ENCODE measurements at regions of chr11 and their contacts with region 1.

Region 1: DNA sequence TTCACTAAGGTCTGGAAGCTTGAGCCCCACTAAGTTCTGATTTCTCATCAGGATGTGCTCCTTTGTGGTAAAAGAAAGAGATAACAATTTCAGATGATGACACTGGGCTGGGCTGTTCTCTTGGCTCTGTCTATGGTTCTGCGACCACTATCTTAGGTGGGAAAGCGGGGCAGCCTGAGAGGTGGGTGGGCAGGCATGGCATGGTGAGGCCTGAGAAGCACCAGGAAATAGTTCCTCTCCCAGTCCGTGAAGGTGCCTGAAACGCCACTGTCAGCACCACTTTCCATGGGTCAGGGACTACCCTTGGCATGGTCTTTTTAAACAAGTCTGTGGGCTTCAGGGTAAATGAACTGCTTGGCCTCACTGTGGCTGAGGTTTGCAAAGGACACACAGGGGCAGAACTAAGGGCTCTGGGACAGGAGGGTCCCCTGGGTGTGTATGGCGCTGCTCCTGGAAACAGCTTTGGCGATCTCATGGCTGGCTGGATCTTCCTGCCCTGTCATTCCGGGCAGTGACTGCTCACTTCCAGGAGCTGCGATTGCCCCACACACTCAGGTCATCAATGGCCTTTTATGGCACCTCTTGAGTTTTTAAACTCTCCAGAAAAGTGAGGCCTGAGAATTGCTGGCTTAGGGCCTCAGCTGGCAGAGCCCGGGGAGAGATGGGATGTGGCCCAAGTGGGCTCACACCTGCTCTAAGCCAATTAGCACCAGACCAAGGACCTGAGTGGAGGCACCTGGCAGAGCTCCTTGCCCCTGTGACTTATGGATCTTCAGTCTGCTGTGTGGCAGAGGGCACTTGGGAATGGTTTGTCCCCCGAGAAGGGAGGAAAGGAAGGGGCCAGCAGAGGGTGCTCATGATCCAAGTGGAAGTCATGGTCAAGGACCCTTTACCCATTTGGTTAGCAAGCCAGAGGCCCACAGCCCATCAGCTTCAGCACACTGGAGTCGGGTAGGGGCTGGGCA is 55.6 kb upstream of the LYVE1 start:
- DNase-seq: peak; percentile 81 to 82
- H3K4me3 ChIP-seq: no peak overlapping the region
- H3K4me3 Mint-ChIP-seq: no peak overlapping the region
- H3K27ac Mint-ChIP-seq: no peak overlapping the region
- H3K4me1 ChIP-seq: peaks cover 14% of the 10 kb centered on the region
- H3K4me1 Mint-ChIP-seq: no peaks in the 10 kb centered on the region
- H3K27me3 ChIP-seq: no peaks in the 10 kb centered on the region
- H3K27me3 Mint-ChIP-seq: no peaks in the 10 kb centered on the region
- CTCF ChIP-seq: peak; percentile 79 to 83

Region 2: DNA sequence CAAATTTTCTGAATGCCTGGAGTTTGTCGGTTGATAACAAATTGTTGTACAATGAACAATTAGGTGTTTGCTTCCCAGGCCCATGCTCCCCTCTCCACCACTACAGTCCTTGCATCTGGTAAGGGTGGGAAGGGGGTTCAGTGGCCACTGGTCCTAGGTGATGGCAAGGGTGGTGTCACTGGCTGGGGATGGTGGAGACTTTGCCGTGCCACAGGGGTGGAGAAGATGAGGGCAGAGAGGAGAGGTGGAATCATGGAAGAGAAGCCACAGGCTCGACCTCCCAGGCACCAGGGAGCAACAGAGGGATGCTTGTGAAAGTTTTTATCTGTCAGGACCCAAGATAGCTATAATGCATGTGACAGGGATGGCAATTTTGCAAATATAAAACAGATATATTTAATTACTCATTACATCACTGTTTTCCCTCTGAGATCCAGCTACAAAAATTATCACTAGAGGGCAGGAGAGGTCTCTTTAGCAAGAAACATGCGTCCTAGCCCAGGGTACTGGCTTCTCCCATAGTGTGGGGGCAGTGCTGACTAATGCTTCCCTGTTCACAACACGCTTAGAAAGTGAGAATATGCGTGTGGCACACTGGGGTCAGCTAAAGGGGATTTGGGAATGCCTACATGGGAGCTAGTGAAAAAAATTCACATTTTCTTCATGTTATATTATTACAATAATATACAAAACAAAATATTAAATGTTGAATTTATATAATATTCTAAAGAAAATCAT is 218.1 kb before region 1 on chr11:
- CTCF ChIA-PET with region 1: interaction called, 3 read pairs
- POLR2A ChIA-PET with region 1: no interaction called
- intact Hi-C with region 1: loop called (anchors 2 kb)
- DNase-seq: peak; percentile 80 to 84
- H3K4me3 ChIP-seq: no peak overlapping the region
- H3K4me3 Mint-ChIP-seq: no peak overlapping the region
- H3K27ac Mint-ChIP-seq: peak overlapping the region; percentile 74
- H3K4me1 ChIP-seq: peaks cover 14% of the 10 kb centered on the region
- H3K4me1 Mint-ChIP-seq: peaks cover 16% of the 10 kb centered on the region
- H3K27me3 ChIP-seq: no peaks in the 10 kb centered on the region
- H3K27me3 Mint-ChIP-seq: no peaks in the 10 kb centered on the region
- CTCF ChIP-seq: peak; percentile 74 to 81

Region 3: GRCh38 chr11:10592331-10592730 is 31.7 kb before region 1 on chr11:
- CTCF ChIA-PET with region 1: no interaction called
- POLR2A ChIA-PET with region 1: no interaction called
- intact Hi-C with region 1: loop called (anchors 2 kb)
- DNase-seq: peak in 1 of 2 experiments; percentile 15
- H3K4me3 ChIP-seq: no peak overlapping the region
- H3K4me3 Mint-ChIP-seq: no peak overlapping the region
- H3K27ac Mint-ChIP-seq: no peak overlapping the region
- H3K4me1 ChIP-seq: peaks cover 6% of the 10 kb centered on the region; the same call in 1 of the 2 replicates
- H3K4me1 Mint-ChIP-seq: peaks cover 10% of the 10 kb centered on the region
- H3K27me3 ChIP-seq: no peaks in the 10 kb centered on the region
- H3K27me3 Mint-ChIP-seq: no peaks in the 10 kb centered on the region
- CTCF ChIP-seq: no peak

Region 4: GRCh38 chr11:10653926-10654810 is 30.1 kb after region 1 on chr11:
- CTCF ChIA-PET with region 1: no interaction called
- POLR2A ChIA-PET with region 1: no interaction called
- intact Hi-C with region 1: loop called (anchors 1 kb)
- DNase-seq: no peak
- H3K4me3 ChIP-seq: no peak overlapping the region
- H3K4me3 Mint-ChIP-seq: no peak overlapping the region
- H3K27ac Mint-ChIP-seq: peak overlapping the region; percentile 97
- H3K4me1 ChIP-seq: peaks cover 64% of the 10 kb centered on the region
- H3K4me1 Mint-ChIP-seq: peaks cover 16% of the 10 kb centered on the region
- H3K27me3 ChIP-seq: no peaks in the 10 kb centered on the region
- H3K27me3 Mint-ChIP-seq: no peaks in the 10 kb centered on the region
- CTCF ChIP-seq: peak; percentile 34 to 60

Region 5: GRCh38 chr11:10659339-10660216 is 35.5 kb after region 1 on chr11:
- CTCF ChIA-PET with region 1: no interaction called
- POLR2A ChIA-PET with region 1: no interaction called
- intact Hi-C with region 1: loop called (anchors 1 kb)
- DNase-seq: peak; percentile 89 to 95
- H3K4me3 ChIP-seq: no peak overlapping the region
- H3K4me3 Mint-ChIP-seq: peak overlapping the region; percentile 32
- H3K27ac Mint-ChIP-seq: peak overlapping the region; percentile 97
- H3K4me1 ChIP-seq: peaks cover 69% of the 10 kb centered on the region
- H3K4me1 Mint-ChIP-seq: peaks cover 43% of the 10 kb centered on the region
- H3K27me3 ChIP-seq: no peaks in the 10 kb centered on the region
- H3K27me3 Mint-ChIP-seq: no peaks in the 10 kb centered on the region
- CTCF ChIP-seq: no peak

Region 6: DNA sequence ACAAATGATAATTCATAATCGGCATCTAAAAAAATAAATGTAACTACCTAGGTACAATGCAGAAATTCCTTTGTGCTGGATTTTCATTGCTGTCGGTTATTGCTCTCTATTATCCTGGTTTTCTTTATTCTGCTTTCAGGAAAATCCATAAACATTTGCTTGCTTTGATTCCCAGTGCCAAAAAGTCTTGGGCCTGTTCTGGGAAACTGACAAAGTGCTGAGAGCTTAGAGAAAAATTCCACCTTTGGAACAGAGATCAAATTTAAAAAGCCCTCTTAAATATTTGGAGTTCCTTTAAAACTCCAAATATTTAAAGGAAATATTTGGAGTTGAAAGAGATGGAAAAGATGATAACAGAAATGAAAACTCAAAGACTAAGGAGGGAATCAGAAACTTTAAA is 321.1 kb after region 1 on chr11:
- CTCF ChIA-PET with region 1: no interaction called
- POLR2A ChIA-PET with region 1: no interaction called
- intact Hi-C with region 1: no loop called
- DNase-seq: no peak
- H3K4me3 ChIP-seq: no peak overlapping the region
- H3K4me3 Mint-ChIP-seq: no peak overlapping the region
- H3K27ac Mint-ChIP-seq: no peak overlapping the region
- H3K4me1 ChIP-seq: peaks cover 16% of the 10 kb centered on the region
- H3K4me1 Mint-ChIP-seq: peaks cover 14% of the 10 kb centered on the region
- H3K27me3 ChIP-seq: no peaks in the 10 kb centered on the region
- H3K27me3 Mint-ChIP-seq: no peaks in the 10 kb centered on the region
- CTCF ChIP-seq: no peak

Measured in Caco-2 (cell line).